Dorsolateral prefrontal cortex (tissue), 120 donors: ENCODE measurements at regions of chr15 and their contacts with region 1.

Region 1: DNA sequence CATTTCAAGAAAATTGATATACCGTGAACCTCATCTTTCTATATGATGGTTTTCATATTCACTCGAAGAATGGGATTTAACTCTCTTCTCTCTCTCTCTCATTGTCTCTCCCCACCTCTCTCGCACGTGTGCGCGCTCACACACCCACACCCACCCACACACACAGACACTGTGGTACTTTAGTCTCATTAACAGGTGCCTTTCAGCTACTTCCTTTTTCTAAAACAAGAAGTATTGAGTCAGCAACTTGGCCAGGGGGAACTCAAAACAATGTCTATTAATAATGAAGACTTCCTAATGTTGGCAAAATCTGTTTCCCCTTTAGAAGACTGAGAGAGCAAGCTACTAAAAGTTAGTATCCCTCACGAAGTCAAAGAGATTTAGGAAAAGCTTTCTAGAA is 150.7 kb downstream of the TMCO5A start:
- DNase-seq: no peak
- H3K4me3 ChIP-seq: no peak overlapping the region
- H3K27ac ChIP-seq: peak overlapping the region in 10 of 59 donors; percentile 0 to 61 (median 22)
- H3K27me3 ChIP-seq: no peaks in the 10 kb centered on the region
- CTCF ChIP-seq: no peak

Region 2: DNA sequence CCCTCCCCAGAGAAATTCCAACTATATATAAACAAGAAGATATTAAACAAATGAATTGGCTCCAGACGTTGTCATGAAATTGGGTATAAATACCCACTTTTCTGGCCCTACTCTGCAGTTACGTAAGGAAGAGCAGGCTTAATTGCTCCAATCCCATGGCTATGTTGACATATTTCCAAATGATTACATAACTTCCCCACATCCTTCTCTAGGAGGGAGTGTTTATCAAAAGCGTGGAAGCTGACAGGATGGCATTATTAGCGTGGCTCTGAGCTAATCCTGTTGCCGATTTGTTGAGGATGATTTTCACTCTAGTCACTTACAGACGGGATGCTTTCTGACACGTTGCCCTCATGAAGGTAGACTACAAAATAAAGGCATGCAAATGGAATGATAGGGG is 498.1 kb before region 1 on chr15:
- intact Hi-C with region 1: no loop called
- DNase-seq: no peak
- H3K4me3 ChIP-seq: no peak overlapping the region
- H3K27ac ChIP-seq: no peak overlapping the region
- H3K27me3 ChIP-seq: no peaks in the 10 kb centered on the region
- CTCF ChIP-seq: no peak

Region 3: GRCh38 chr15:38072348-38073177 is 12.6 kb before region 1 on chr15:
- intact Hi-C with region 1: no loop called
- DNase-seq: peak; percentile 52 to 94 (median 92)
- H3K4me3 ChIP-seq: peak overlapping the region; percentile 34 to 80 (median 64)
- H3K27ac ChIP-seq: peak overlapping the region; percentile 74 to 98 (median 95)
- H3K27me3 ChIP-seq: no peaks in the 10 kb centered on the region
- CTCF ChIP-seq: peak in 38 of 56 donors; percentile 4 to 49 (median 24)

Region 4: GRCh38 chr15:38129531-38130204 is 44.6 kb after region 1 on chr15:
- intact Hi-C with region 1: loop called in 1 of 2 experiments (anchors 5 kb)
- DNase-seq: peak in 8 of 10 donors; percentile 57 to 84 (median 63)
- H3K4me3 ChIP-seq: peak overlapping the region; percentile 27 to 70 (median 49)
- H3K27ac ChIP-seq: peak overlapping the region in 56 of 59 donors; percentile 49 to 89 (median 79)
- H3K27me3 ChIP-seq: no peaks in the 10 kb centered on the region
- CTCF ChIP-seq: peak in 2 of 56 donors; percentile 2 to 12